Dorsolateral prefrontal cortex (tissue), 120 donors: ENCODE measurements at regions of chr6 and their contacts with region 1.

Region 1: DNA sequence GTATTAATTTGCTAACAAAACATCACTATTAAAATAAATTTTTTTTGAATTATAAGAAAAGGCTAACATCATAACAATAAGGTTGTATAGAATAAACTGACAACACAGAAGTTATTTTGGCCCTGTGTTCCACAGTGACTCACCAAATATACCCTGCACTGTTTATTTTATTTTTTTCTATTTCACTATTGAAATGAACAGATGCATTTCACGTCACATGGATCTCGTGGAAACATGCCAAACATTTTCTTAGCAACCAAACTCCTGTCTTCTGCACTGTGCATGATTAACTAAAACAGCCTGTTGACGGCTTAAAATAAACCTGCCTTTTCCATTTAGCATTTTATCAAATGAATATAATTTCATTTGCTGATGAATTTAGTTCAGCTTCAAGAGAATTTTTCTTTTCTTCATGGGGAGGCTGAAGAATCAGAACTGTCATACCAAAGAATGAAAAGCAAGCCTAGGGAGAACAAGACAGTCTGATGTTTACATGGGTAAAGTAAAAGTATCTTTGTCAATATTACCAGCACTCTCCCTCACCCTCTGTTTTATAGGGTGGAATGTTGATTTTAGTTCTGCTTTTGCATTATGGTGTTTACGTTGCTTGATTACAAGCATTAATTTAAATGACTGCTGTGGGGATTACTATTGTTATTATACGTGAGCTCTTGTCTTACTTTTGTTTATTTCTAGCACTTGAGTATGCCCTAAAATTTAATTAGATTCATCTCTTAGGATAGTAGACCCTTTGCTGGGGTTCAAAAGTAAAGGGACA is 115.3 kb downstream of the LCA5 start:
- DNase-seq: peak in 3 of 10 donors; percentile 22 to 64 (median 52)
- H3K4me3 ChIP-seq: peak overlapping the region; percentile 3 to 71 (median 52)
- H3K27ac ChIP-seq: peak overlapping the region in 58 of 59 donors; percentile 13 to 95 (median 84)
- H3K27me3 ChIP-seq: no peaks in the 10 kb centered on the region
- CTCF ChIP-seq: peak in 2 of 56 donors; percentile 5 to 12

Region 2: DNA sequence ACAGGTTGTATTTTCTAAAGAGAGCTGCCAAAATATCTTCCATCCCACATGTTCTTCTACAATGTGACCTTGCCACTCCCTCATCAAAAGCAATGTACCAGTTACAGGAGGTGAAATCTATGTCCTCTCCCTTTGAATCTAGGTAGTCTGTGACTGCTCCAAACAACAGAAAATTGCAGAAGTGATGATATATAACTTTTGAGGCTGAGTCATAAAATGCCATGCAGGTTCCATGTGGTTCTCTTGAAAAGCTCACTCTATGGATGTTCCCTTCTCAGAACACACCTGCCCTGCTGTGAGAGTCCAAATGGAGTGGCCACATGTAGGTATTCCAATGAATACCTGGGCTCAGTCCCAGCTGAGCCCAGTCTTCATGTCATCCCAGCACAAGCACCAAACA is 327.0 kb before region 1 on chr6:
- intact Hi-C with region 1: no loop called
- DNase-seq: no peak
- H3K4me3 ChIP-seq: no peak overlapping the region
- H3K27ac ChIP-seq: no peak overlapping the region
- H3K27me3 ChIP-seq: no peaks in the 10 kb centered on the region
- CTCF ChIP-seq: no peak

Region 3: DNA sequence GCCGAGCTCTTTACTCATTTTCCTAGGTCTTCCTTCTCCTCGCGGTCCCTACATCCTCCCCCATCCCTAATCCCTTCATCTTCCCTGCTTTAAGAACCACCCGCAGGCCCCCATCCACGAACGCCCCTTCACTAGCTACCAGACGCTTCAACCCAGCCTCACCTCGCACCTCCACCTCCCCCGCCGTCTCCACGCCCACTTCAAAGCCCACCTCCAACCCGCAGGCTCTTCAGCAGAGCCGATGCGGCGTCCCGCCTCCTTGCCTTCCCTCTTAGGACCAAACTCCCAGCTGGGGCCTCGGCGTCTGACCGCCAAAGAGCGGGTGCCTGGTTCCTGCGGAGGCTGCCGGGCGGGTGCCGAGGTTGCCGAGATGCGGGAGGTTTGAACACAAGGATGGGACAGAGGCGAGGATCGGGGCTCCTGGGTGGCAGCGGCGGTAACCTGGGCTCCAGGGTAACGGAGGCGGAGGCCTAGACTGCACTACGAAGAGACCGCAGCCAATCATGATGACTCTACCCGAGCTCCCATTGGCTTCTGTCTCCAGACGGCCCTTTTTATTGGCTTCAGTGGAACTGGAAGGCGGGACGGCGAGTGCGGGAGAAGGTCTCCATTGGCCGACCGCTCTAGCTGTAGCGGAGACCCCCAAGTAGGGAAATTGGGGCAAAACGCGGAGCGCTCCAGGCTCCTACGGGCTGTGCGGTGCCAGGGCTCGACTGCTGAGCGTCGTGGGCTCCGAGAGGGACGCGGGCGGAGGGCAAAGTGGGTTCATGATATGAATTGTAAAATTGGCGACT is 115.3 kb after region 1 on chr6 and contains the start of gene LCA5:
- intact Hi-C with region 1: loop called in 1 of 2 experiments (anchors 5 kb)
- DNase-seq: peak; percentile 84 to 97 (median 96)
- H3K4me3 ChIP-seq: peak within 1 kb of the TSS; percentile 67 to 95 (median 85)
- H3K27ac ChIP-seq: peak within 1 kb of the TSS; percentile 37 to 96 (median 91)
- H3K27me3 ChIP-seq: no peaks in the 10 kb centered on the region
- CTCF ChIP-seq: peak in 10 of 56 donors; percentile 3 to 38 (median 15)
- total RNA-seq, gene LCA5: 7.3 to 17.7 (median 10.5) TPM